ENCODE measurements at regions of chr3 and their contacts with region 1.

Region 1: DNA sequence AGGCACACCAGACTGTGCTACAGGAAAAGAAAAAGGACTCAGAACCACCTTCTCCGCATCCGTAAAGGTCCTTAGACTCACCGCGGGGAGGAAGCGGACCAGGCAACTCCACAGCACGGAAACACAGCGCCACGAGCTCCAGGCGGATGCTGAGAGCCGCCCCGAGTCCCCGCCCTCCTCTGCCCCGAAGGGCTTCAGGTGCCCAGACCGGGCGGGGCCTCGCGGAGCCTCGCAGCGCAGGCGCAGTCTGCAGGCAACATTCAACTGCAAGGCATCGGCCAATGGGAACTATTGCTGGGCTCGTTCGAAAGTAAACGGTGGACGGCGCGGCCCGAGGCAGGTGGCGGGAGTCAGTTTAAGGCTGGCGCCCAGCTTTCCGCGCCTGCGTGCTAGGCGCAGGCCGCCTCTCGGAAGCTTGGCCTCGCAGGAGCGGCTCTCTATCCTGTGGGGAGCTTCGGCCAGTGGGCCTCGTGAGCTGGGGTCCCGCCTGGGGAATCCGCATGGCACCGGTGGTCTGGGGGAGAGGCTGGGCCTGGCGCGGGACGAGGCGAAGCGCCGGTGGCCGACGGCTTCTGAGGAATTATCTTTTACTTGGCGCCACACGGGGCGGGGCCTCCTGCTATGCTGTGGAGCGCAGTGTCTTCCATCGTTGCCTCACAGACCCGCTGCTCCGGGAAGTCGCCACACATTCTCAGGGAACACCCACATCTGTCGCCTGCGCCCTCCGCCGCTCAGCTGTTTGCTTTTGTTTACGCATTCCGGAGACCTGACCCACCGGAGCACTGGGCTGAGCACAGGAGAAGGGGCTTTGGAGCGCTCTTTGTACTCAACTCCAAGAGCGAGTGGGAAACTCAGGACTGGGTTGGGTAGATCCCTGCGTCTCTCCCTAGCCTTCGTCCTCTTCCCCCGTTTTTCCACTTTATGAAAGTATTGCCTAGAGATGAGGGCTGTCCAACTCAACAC is at the start of gene TRIM59:
- DNase-seq: peak; percentile 99
- H3K4me3 Mint-ChIP-seq: peak within 1 kb of the TSS; percentile 89
- H3K27ac Mint-ChIP-seq: peak within 1 kb of the TSS; percentile 95
- H3K4me1 Mint-ChIP-seq: peaks cover 39% of the 10 kb centered on the region
- H3K27me3 Mint-ChIP-seq: no peaks in the 10 kb centered on the region
- total RNA-seq, gene TRIM59: 54.3 to 56.6 TPM

Region 2: DNA sequence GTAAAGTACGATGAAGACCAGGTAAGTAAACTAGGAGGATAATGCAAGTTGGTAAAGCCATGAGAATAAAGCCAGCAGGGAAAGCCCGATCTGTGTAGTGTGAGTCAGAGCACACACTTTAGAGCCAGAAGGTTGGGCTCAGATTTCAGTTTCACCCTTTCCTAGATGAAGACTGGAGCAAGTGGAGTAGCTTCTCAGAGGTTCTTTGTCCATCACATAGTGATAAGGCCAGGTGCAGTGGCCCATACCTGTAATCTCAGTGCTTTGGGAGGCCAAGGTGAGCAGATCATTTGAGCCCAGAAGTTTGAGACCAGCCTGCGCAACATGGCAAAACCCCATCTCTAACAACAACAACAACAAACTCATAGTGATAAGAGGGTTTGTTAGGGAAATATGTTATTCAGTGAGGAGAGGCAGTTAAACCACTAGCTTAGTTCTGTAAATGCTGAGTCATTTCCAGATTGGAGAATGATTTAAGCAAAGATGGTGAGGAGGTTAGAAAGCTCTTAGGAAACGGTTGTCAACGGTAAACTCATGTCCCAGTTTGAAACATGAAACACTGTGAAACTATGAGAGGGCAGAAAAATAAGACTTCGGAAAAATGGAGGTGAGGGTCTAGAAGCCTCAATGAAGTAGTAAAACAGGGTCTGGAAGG is 422.2 kb before region 1 on chr3:
- CTCF ChIA-PET with region 1: interaction called, 3 read pairs
- POLR2A ChIA-PET with region 1: interaction called, 16 read pairs
- DNase-seq: peak; percentile 38
- H3K4me3 Mint-ChIP-seq: peak overlapping the region; percentile 19
- H3K27ac Mint-ChIP-seq: peak overlapping the region; percentile 89
- H3K4me1 Mint-ChIP-seq: peaks cover 38% of the 10 kb centered on the region
- H3K27me3 Mint-ChIP-seq: no peaks in the 10 kb centered on the region

Region 3: GRCh38 chr3:160413613-160414248 is 36.2 kb before region 1 on chr3:
- CTCF ChIA-PET with region 1: interaction called, 13 read pairs
- POLR2A ChIA-PET with region 1: interaction called, 97 read pairs
- DNase-seq: peak; percentile 60
- H3K4me3 Mint-ChIP-seq: no peak overlapping the region
- H3K27ac Mint-ChIP-seq: no peak overlapping the region
- H3K4me1 Mint-ChIP-seq: peaks cover 63% of the 10 kb centered on the region
- H3K27me3 Mint-ChIP-seq: no peaks in the 10 kb centered on the region

Region 4: GRCh38 chr3:160460033-160460432 is 10.1 kb after region 1 on chr3:
- CTCF ChIA-PET with region 1: interaction called, 3 read pairs
- POLR2A ChIA-PET with region 1: interaction called, 21 read pairs
- DNase-seq: no peak
- H3K4me3 Mint-ChIP-seq: no peak overlapping the region
- H3K27ac Mint-ChIP-seq: no peak overlapping the region
- H3K4me1 Mint-ChIP-seq: no peaks in the 10 kb centered on the region
- H3K27me3 Mint-ChIP-seq: peaks cover 25% of the 10 kb centered on the region

Region 5: GRCh38 chr3:160565442-160566403 is 115.8 kb after region 1 on chr3 and contains the start of gene KPNA4:
- CTCF ChIA-PET with region 1: no interaction called
- POLR2A ChIA-PET with region 1: interaction called, 36 read pairs
- DNase-seq: peak; percentile 97
- H3K4me3 Mint-ChIP-seq: peak within 1 kb of the TSS; percentile 97
- H3K27ac Mint-ChIP-seq: peak within 1 kb of the TSS; percentile 96
- H3K4me1 Mint-ChIP-seq: peaks cover 64% of the 10 kb centered on the region
- H3K27me3 Mint-ChIP-seq: no peaks in the 10 kb centered on the region
- total RNA-seq, gene KPNA4: 37.3 TPM